Head of caudate nucleus (tissue), 42 donors: ENCODE measurements at regions of chr5 and their contacts with region 1.

Region 1: GRCh38 chr5:77076961-77077823 is 9.9 kb downstream of the ZBED3 start:
- DNase-seq: peak; percentile 24 to 89 (median 77)

Region 2: DNA sequence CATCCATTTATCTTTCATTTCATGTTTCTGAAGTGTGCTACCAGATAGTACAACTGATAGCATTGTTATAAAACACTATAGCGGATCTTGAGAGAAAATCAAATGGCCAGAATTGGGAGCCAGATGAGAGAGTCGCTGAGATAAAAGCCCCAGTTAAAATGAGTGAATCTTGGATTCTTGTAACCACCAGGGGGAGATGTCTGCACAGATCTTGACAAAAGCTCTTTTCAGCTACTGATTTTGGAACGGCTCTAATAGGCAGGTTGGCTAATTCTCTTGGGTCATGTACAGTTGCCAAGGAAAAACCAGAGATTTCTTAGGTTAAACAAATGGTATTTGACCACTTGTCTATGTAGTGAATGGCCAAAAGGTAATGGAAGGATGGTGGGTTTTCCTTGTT is 475.7 kb before region 1 on chr5:
- intact Hi-C with region 1: loop called (anchors 10 kb)
- DNase-seq: peak in 21 of 42 donors; percentile 6 to 73 (median 41)

Region 3: DNA sequence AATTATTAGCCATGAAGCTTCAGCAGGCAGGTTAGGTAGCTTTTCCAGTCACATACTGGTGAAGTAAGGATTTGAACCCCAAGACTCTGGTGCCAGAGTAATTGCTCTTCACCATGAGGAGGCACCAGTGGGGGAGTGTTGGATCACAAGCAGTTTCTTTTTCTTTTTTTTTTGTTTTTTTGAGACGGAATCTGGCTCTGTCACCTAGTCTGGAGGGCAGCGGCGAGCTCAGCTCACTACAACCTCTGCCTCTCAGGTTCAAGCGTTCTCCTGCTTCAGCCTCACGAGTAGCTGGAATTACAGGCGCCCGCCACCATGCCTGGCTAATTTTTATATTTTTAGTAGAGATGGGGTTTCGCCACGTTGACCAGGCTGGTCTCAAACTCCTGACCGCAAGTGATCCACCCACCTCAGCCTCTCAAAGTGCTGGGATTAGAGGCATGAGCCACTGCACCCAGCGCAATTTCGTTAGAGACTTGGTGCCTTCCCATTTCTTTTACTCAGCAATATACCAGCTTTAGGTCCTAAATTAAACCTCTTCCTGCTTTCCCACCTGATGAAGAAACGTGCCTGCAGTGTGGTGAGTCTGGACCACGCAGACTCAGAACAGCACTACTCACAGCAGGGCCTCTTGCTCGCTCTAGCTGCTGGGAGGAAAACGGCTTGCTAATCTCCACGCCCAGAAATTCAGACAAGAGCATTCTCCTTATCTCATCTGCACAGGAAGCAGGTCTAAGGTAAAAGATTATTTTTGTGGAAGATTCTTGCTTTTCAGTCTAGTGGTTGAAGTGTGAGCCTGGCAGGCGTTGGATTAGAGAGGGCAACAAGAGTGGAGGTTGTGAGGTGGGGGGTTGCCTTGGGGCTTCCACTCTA is 227.5 kb before region 1 on chr5 and contains the start of gene S100Z:
- intact Hi-C with region 1: no loop called
- DNase-seq: peak in 6 of 42 donors; percentile 10 to 44 (median 28)

Region 4: GRCh38 chr5:77032654-77033034 is 44.5 kb before region 1 on chr5:
- intact Hi-C with region 1: loop called (anchors 2 kb)
- DNase-seq: no peak